ENCODE measurements at regions of chr22 and their contacts with region 1.

Region 1: DNA sequence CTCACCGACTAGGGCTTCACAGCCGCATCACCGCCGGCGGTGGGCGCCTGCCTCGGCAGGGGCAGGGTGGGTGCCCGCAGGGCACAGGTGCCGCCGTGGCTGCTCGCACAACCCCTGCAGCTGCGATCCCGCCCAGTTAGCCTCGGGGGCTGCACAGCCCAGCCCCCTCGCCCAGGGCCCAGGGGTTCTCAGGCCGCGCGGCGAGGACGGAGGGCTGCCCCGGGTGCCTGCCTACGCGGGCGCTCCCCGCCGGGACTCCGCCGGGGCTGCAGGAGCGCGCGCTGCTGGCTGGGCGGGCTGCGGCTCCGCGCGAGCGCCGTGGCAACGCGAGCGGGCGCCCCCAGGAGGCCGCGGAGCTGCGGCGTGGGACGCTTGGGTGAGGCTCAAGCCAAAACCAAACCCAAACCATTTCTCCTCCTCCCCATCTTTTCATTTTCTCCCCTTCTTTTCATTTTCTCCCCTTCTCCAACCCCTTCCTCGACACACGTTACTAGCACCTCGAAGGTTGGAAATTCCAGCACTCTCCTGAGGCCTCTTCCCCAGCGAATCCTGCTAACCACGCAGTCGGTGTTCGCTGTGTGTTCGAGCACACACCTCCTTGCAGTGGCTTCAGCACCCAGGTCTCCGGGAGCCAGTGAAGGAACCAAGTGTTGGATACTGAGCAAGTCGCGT is at the start of gene MICAL3:
- DNase-seq: peak; percentile 54 to 78 (median 68)
- ATAC-seq: peak in 3 of 4 donors; percentile 66 to 91 (median 87)
- H3K4me3 ChIP-seq: peak within 1 kb of the TSS; percentile 56 to 92 (median 72)
- H3K27ac ChIP-seq: peak within 1 kb of the TSS; percentile 22 to 91 (median 86)
- H3K4me1 ChIP-seq: peaks cover 0 to 35% (median 11%) of the 10 kb centered on the region in 12 donors
- H3K27me3 ChIP-seq: peaks cover 0 to 32% (median 0%) of the 10 kb centered on the region in 9 donors
- CTCF ChIP-seq: peak; percentile 27 to 80 (median 64)
- POLR2A ChIP-seq: peak in 1 of 2 donors; percentile 19
- total RNA-seq, gene MICAL3: 41.3 to 125 (median 101) TPM

Region 2: GRCh38 chr22:17903564-17904295 is 120.7 kb before region 1 on chr22:
- intact Hi-C with region 1: loop called in 2 of 10 experiments (anchors 5 kb)
- DNase-seq: peak in 2 of 5 donors; percentile 56 to 59
- ATAC-seq: peak; percentile 47 to 64 (median 60)
- H3K4me3 ChIP-seq: no peak overlapping the region
- H3K27ac ChIP-seq: peak overlapping the region in 10 of 12 donors; percentile 24 to 92 (median 54)
- H3K4me1 ChIP-seq: peaks cover 0 to 57% (median 25%) of the 10 kb centered on the region in 12 donors
- H3K27me3 ChIP-seq: no peaks in the 10 kb centered on the region
- CTCF ChIP-seq: no peak
- POLR2A ChIP-seq: no peak

Region 3: GRCh38 chr22:17972385-17973181 is 51.8 kb before region 1 on chr22:
- intact Hi-C with region 1: loop called in 2 of 10 experiments (anchors 5 kb)
- DNase-seq: peak in 1 of 5 donors; percentile 42
- ATAC-seq: peak in 3 of 4 donors; percentile 28 to 33 (median 33)
- H3K4me3 ChIP-seq: no peak overlapping the region
- H3K27ac ChIP-seq: peak overlapping the region in 9 of 12 donors; percentile 23 to 66 (median 51)
- H3K4me1 ChIP-seq: peaks cover 0 to 74% (median 46%) of the 10 kb centered on the region in 12 donors
- H3K27me3 ChIP-seq: no peaks in the 10 kb centered on the region
- CTCF ChIP-seq: no peak
- POLR2A ChIP-seq: no peak

Region 4: GRCh38 chr22:18001040-18001893 is 23.1 kb before region 1 on chr22:
- intact Hi-C with region 1: loop called in 3 of 10 experiments (anchors 2 kb)
- DNase-seq: peak; percentile 91 to 94 (median 92)
- ATAC-seq: peak; percentile 96 to 98 (median 97)
- H3K4me3 ChIP-seq: peak overlapping the region; percentile 65 to 99 (median 84)
- H3K27ac ChIP-seq: peak overlapping the region; percentile 86 to 98 (median 95)
- H3K4me1 ChIP-seq: peaks cover 0 to 37% (median 18%) of the 10 kb centered on the region in 12 donors
- H3K27me3 ChIP-seq: peaks cover 0 to 3% (median 0%) of the 10 kb centered on the region in 9 donors
- CTCF ChIP-seq: peak in 11 of 12 donors; percentile 19 to 67 (median 49)
- POLR2A ChIP-seq: peak in 1 of 2 donors; percentile 86

Measured in heart left ventricle (tissue), 16 donors.